CD4-positive, alpha-beta T cell (primary cell): ENCODE measurements at regions of chr1 and their contacts with region 1.

Region 1: DNA sequence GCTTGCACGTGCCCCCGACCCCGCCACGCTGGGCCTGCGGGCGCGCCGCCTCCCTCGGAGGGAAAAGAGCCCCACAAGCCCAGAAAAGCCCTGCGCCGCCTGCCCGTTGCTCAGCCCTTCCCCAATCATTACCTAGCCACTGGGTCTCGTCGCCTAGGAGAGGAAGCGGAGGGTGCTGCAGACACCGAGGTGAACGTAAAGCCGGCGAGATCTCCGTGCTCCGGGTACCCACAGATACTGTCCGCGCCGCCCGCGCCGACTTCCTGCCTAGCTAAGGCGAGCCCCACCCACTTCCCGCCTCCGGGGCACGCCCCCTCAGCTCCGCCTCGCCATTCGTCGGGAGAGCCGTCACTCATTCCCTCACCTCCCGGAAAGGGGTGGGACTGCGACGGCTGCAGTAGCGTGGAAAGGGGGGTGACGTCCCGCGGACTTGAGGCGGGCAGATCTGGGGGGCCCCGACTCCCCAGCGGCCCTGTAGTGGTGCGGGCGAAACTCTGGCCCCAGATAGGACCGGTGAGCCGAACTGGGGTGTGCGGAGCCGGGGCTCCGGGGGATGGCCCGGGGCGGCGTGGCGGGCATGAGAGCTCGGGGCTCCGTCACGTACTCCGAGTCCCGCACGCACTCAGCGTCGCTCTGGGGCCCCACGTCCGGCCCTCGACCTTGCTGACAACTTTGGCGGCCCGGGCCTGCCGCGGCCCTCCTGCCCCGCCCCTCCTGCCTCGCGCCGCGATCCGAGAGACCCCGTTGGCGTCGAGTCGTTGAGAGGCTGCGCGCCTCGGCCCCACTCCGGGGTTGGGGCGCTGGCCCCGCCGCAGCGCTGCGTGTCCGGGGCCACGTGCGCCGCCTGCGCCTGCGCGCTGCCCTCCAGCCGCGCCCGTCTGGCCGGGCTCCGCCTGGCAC is at the start of gene ENO1:
- DNase-seq: peak; percentile 97 to 100 (median 99)
- ATAC-seq: peak; percentile 82
- H3K4me3 ChIP-seq: peak within 1 kb of the TSS; percentile 90
- H3K4me3 Mint-ChIP-seq: peak within 1 kb of the TSS; percentile 98
- H3K27ac ChIP-seq: peak within 1 kb of the TSS; percentile 96 to 97
- H3K27ac Mint-ChIP-seq: peak within 1 kb of the TSS; percentile 92
- H3K4me1 ChIP-seq: peaks cover 53% of the 10 kb centered on the region
- H3K4me1 Mint-ChIP-seq: peaks cover 52% of the 10 kb centered on the region
- H3K27me3 ChIP-seq: no peaks in the 10 kb centered on the region
- H3K27me3 Mint-ChIP-seq: no peaks in the 10 kb centered on the region
- CTCF ChIP-seq: no peak
- total RNA-seq, gene ENO1: 120 to 129 TPM

Region 2: GRCh38 chr1:7961216-7962015 is 917.3 kb before region 1 on chr1 and contains the start of gene PARK7:
- CTCF ChIA-PET with region 1: no interaction called
- POLR2A ChIA-PET with region 1: interaction called, 5 read pairs
- intact Hi-C with region 1: loop called in 1 of 2 experiments (anchors 10 kb)
- DNase-seq: peak; percentile 99 to 100 (median 100)
- ATAC-seq: peak; percentile 95
- H3K4me3 ChIP-seq: peak within 1 kb of the TSS; percentile 84
- H3K4me3 Mint-ChIP-seq: peak within 1 kb of the TSS; percentile 99
- H3K27ac ChIP-seq: peak within 1 kb of the TSS; percentile 88 to 94
- H3K27ac Mint-ChIP-seq: peak within 1 kb of the TSS; percentile 98
- H3K4me1 ChIP-seq: peaks cover 56% of the 10 kb centered on the region
- H3K4me1 Mint-ChIP-seq: peaks cover 78% of the 10 kb centered on the region
- H3K27me3 ChIP-seq: no peaks in the 10 kb centered on the region
- H3K27me3 Mint-ChIP-seq: no peaks in the 10 kb centered on the region
- CTCF ChIP-seq: peak; percentile 57
- total RNA-seq, gene PARK7: 57.7 to 62.4 TPM

Region 3: DNA sequence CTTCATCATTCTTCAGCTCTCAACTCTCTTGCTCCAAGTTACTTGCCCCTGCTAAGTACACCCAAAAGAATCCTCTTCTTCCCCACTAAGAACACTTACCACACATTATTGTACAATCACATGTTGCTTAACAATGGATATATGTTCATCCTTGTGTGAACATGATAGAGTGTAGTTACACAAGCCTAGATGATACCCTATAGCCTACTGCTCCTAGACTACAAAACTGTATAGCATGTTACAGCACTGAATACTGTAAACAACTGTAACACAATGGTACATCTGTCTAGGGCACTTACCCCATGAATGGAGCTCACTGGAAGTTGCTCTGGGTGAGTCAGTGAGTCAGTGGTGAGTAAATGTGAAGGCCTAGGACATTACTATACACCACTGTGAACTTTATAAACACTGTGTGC is 138.7 kb before region 1 on chr1:
- CTCF ChIA-PET with region 1: no interaction called
- POLR2A ChIA-PET with region 1: no interaction called
- intact Hi-C with region 1: no loop called
- DNase-seq: no peak
- ATAC-seq: no peak
- H3K4me3 ChIP-seq: no peak overlapping the region
- H3K4me3 Mint-ChIP-seq: no peak overlapping the region
- H3K27ac ChIP-seq: no peak overlapping the region
- H3K27ac Mint-ChIP-seq: no peak overlapping the region
- H3K4me1 ChIP-seq: no peaks in the 10 kb centered on the region
- H3K4me1 Mint-ChIP-seq: no peaks in the 10 kb centered on the region
- H3K27me3 ChIP-seq: no peaks in the 10 kb centered on the region
- H3K27me3 Mint-ChIP-seq: no peaks in the 10 kb centered on the region
- CTCF ChIP-seq: no peak

Region 4: DNA sequence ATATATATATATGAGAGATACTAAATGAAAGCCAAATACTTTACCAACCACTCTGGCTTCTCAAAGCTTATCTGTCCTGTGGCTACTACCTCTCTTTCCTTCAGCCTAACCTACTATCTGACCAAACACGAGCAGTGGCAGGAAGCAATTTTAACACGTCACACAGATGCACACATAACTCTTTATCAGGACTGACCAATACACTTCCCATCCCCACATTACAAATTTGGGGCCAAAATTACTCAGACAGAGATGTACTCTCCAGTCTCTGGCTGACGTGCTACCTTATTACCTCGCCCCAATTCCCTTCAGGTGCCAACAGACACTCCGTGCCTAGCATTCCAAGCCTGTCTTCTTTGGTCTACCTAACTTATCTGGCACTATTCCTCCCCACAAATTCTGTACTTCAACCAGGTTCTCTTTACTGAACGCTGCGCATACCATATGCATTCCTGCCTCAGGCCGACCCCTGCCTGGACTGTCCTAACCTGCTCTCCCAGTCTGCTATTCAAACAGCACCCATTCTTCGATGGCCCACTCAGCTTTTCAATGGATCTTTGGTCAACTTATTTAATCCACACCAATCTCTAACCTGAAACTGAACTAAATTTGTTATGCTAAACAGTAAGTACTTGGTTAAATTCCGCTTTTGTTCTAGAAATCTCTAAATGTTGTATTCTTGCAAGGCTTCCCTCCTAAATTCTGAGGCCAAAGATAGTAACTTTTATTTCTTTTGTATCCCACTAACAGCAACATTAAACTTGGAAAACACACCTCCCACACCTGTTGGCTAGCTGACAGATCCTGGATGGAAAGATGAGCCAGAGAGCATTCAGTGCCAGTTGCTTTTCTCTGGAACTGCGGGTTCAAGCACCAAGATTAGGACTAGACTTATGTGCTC is 89.1 kb before region 1 on chr1:
- CTCF ChIA-PET with region 1: no interaction called
- POLR2A ChIA-PET with region 1: no interaction called
- intact Hi-C with region 1: no loop called
- DNase-seq: no peak
- ATAC-seq: no peak
- H3K4me3 ChIP-seq: no peak overlapping the region
- H3K4me3 Mint-ChIP-seq: no peak overlapping the region
- H3K27ac ChIP-seq: no peak overlapping the region
- H3K27ac Mint-ChIP-seq: no peak overlapping the region
- H3K4me1 ChIP-seq: no peaks in the 10 kb centered on the region
- H3K4me1 Mint-ChIP-seq: no peaks in the 10 kb centered on the region
- H3K27me3 ChIP-seq: no peaks in the 10 kb centered on the region
- H3K27me3 Mint-ChIP-seq: no peaks in the 10 kb centered on the region
- CTCF ChIP-seq: no peak

Region 5: DNA sequence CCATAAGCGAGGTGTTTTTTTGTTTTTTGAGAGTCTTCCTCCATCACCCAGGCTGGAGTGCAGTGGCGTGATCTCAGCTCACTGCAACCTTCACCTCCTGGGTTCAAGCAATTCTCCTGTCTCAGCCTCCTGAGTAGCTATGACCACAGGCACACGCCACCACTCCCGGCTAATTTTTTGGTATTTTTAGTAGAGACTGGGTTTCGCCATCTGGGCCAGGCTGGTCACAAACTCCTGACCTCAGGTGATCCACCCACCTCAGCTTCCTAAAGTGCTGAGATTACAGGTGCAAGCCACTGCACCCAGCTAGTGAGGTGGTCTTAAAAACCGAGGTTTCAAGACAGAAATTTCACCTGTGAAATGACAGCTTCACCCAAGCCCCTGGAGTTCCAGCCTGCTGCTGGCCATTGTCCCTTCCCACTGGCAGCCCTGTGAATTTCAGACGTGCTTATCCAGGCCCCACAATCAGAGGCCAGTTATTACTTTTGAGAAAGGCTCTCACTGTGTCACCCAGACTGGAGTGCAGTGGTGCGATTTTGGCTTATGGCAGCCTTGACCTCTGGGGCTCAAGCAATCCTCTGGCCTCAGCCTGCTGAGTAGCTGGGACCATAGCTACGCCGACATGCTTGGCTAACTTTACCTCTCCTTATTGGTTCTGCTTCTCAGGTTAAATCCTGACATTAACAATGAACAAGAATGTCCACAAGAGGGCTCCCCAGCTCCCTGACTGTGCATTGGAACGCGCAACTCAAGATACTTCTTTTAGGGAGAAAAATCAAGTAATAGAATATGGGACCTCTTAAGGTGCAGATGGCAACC is 19.6 kb before region 1 on chr1:
- CTCF ChIA-PET with region 1: interaction called, 22 read pairs
- POLR2A ChIA-PET with region 1: interaction called, 21 read pairs
- intact Hi-C with region 1: loop called (anchors 1 to 2 kb)
- DNase-seq: peak in 13 of 14 experiments; percentile 26 to 79 (median 47)
- ATAC-seq: peak; percentile 82
- H3K4me3 ChIP-seq: no peak overlapping the region
- H3K4me3 Mint-ChIP-seq: no peak overlapping the region
- H3K27ac ChIP-seq: no peak overlapping the region
- H3K27ac Mint-ChIP-seq: peak overlapping the region; percentile 15
- H3K4me1 ChIP-seq: peaks cover 13% of the 10 kb centered on the region
- H3K4me1 Mint-ChIP-seq: peaks cover 20% of the 10 kb centered on the region
- H3K27me3 ChIP-seq: no peaks in the 10 kb centered on the region
- H3K27me3 Mint-ChIP-seq: no peaks in the 10 kb centered on the region
- CTCF ChIP-seq: peak; percentile 69

Region 6: DNA sequence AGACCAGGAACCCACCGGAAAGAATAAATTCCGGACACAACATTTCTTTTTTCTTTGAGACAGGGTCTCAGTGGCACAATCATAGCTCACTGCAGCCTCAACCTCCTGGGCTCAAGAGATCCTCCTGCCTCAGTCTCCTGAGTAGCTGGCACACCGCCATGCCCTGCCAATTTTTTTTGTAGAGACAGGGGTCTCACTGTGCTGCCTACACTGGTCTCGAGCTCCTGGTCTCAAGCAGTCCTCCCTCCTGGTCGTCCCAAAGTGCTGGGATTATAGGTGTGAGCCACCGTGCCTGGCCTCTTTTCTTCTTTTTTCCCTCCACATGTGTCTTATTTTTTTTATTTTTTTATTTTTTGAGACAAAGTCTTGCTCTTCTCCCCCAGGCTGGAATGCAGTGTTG is 20.4 kb after region 1 on chr1:
- CTCF ChIA-PET with region 1: no interaction called
- POLR2A ChIA-PET with region 1: interaction called, 11 read pairs
- intact Hi-C with region 1: no loop called
- DNase-seq: no peak
- ATAC-seq: no peak
- H3K4me3 ChIP-seq: no peak overlapping the region
- H3K4me3 Mint-ChIP-seq: no peak overlapping the region
- H3K27ac ChIP-seq: peak overlapping the region in 1 of 2 donors; percentile 79
- H3K27ac Mint-ChIP-seq: no peak overlapping the region
- H3K4me1 ChIP-seq: peaks cover 23% of the 10 kb centered on the region
- H3K4me1 Mint-ChIP-seq: peaks cover 19% of the 10 kb centered on the region
- H3K27me3 ChIP-seq: no peaks in the 10 kb centered on the region
- H3K27me3 Mint-ChIP-seq: no peaks in the 10 kb centered on the region
- CTCF ChIP-seq: no peak